ENCODE measurements at regions of chr12 and their contacts with region 1.

Region 1: GRCh38 chr12:48903982-48904411 is 21.3 kb downstream of the FKBP11 start:
- DNase-seq: peak; percentile 70
- H3K4me3 Mint-ChIP-seq: peak overlapping the region; percentile 68
- H3K27ac Mint-ChIP-seq: peak overlapping the region; percentile 71
- H3K4me1 Mint-ChIP-seq: peaks cover 14% of the 10 kb centered on the region
- H3K27me3 Mint-ChIP-seq: peaks cover 8% of the 10 kb centered on the region

Region 2: GRCh38 chr12:48988030-48988649 is 84.1 kb after region 1 on chr12:
- intact Hi-C with region 1: loop called (anchors 1 kb)
- DNase-seq: peak; percentile 59
- H3K4me3 Mint-ChIP-seq: no peak overlapping the region
- H3K27ac Mint-ChIP-seq: no peak overlapping the region
- H3K4me1 Mint-ChIP-seq: peaks cover 10% of the 10 kb centered on the region
- H3K27me3 Mint-ChIP-seq: peaks cover 76% of the 10 kb centered on the region